A673 (cell line): ENCODE measurements at regions of chr13 and their contacts with region 1.

Region 1: DNA sequence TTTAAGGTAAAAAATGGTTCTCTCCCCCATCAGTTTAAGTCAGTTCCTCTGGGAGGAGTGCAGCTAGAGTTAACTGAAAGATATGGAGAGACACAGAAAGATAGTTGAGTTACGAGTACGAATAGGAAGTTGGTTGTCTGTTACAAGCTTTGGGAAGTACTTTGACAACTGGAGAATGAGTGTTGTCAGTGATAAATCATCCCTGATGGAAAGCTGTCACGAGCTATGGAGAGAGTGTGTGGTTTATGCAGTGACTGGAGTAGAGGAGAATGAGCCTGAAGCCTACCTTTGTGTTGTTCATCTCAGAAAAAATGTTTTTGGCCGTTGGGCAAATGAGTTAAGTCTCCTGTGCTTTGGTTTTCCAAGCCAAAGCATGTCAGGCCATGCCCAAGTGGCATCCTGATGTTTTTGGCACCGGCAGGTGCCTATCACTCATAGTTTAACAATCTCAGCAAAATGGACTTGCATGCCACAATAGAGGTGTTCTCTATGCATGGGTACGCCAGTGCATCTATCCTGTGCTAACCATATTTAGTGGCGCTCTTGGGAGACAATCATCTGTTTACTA is 350.2 kb downstream of the IRS2 start:
- DNase-seq: no peak
- H3K4me3 ChIP-seq: no peak overlapping the region
- H3K27ac ChIP-seq: no peak overlapping the region
- H3K4me1 ChIP-seq: no peaks in the 10 kb centered on the region
- H3K27me3 ChIP-seq: no peaks in the 10 kb centered on the region
- CTCF ChIP-seq: no peak

Region 2: GRCh38 chr13:109100705-109101304 is 335.3 kb before region 1 on chr13:
- CTCF ChIA-PET with region 1: no interaction called
- POLR2A ChIA-PET with region 1: no interaction called
- intact Hi-C with region 1: no loop called
- DNase-seq: no peak
- H3K4me3 ChIP-seq: no peak overlapping the region
- H3K27ac ChIP-seq: no peak overlapping the region
- H3K4me1 ChIP-seq: peaks cover 12% of the 10 kb centered on the region
- H3K27me3 ChIP-seq: no peaks in the 10 kb centered on the region
- CTCF ChIP-seq: no peak

Region 3: DNA sequence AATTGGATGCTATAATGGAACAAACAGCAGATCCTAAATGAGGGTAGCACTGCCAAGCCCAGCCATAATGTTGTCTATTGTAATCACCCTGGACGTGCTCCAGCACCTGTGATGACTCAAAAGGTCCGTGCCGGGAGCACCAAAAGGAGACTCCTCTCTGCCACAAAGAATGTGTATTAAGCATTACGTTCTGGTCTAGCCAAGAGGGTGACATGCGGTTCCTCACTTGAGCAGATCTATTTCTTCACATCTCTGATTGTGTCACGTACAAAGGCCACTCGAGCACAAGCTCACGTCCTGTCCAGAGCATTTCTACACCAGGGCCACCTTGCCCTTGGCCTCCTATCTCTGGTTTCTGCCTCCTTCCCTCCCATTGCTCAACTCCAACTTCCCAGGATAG is 570.2 kb after region 1 on chr13:
- CTCF ChIA-PET with region 1: no interaction called
- POLR2A ChIA-PET with region 1: no interaction called
- intact Hi-C with region 1: loop called (anchors 10 kb)
- DNase-seq: no peak
- H3K4me3 ChIP-seq: no peak overlapping the region
- H3K27ac ChIP-seq: no peak overlapping the region
- H3K4me1 ChIP-seq: peaks cover 9% of the 10 kb centered on the region
- H3K27me3 ChIP-seq: peaks cover 92% of the 10 kb centered on the region
- CTCF ChIP-seq: no peak